ENCODE measurements at regions of chr2 and their contacts with region 1.

Region 1: GRCh38 chr2:221573430-221574230 is 1.5 kb upstream of the EPHA4 start:
- DNase-seq: peak in 1 of 2 donors; percentile 93
- H3K4me3 ChIP-seq: peak overlapping the region; percentile 77 to 92
- H3K27ac ChIP-seq: peak overlapping the region; percentile 83 to 88
- H3K4me1 ChIP-seq: peaks cover 7 to 13% of the 10 kb centered on the region in 2 donors
- H3K27me3 ChIP-seq: no peaks in the 10 kb centered on the region
- CTCF ChIP-seq: peak; percentile 97 to 99 (median 98)

Region 2: GRCh38 chr2:220076738-220077137 is 1496.9 kb before region 1 on chr2:
- intact Hi-C with region 1: loop called (anchors 2 kb)
- DNase-seq: peak in 1 of 2 donors; percentile 78
- H3K4me3 ChIP-seq: peak overlapping the region in 1 of 2 donors; percentile 32
- H3K27ac ChIP-seq: peak overlapping the region; percentile 80 to 85
- H3K4me1 ChIP-seq: peaks cover 0 to 23% of the 10 kb centered on the region in 2 donors
- H3K27me3 ChIP-seq: no peaks in the 10 kb centered on the region
- CTCF ChIP-seq: peak; percentile 21 to 45 (median 22)

Region 3: DNA sequence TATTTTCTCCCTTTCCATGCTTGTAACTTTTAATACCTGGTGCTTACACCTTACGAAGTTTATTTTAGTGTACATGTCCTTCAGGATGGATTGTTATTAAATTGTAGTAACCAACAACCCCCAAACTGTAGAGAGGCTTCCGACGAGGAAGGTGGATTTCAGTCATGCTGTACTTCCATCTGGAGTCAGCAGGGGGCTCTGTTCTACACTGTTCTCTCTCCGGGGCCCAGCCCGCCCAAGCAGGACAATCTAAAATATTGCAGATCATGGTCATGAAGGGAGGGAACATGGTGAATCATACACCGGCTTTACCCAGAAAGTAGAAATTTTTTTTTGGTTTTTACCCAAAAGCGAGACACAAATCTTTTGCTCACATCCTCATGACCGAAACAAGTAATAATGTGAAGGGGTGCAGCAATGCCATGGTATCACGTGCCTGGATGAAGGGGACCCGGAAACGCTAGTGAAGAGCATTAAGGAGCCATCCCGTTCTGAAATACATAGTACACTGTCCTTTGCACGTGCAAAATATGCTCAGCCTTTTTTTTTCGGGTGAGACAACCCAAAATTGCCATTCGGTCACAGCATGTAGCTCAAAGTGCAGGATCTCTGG is 886.3 kb before region 1 on chr2:
- intact Hi-C with region 1: loop called (anchors 1 kb)
- DNase-seq: peak in 1 of 2 donors; percentile 82
- H3K4me3 ChIP-seq: no peak overlapping the region
- H3K27ac ChIP-seq: no peak overlapping the region
- H3K4me1 ChIP-seq: no peaks in the 10 kb centered on the region
- H3K27me3 ChIP-seq: no peaks in the 10 kb centered on the region
- CTCF ChIP-seq: peak; percentile 67 to 91 (median 84)

Region 4: DNA sequence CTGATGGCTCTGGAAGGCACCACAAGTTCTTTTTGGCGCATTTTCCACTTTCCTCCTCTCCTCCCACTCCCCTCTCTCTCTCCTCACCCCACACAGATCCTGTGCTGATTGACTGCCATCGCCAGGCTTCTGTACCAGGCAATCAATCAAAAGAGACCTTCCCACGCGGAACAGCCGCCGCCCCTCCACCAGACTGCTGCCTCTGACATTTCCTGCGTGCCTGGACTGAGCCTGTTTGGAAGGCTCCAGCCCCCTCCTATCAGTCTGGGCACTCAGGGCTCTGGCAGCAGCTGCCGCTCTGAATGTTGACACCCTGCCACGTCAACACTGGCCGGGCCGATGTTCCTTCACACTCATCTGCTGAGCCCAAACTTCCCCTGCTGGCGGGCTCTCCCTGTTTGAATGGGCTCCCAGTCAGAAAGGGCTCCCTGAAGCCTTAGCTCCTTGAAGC is 469.2 kb before region 1 on chr2:
- intact Hi-C with region 1: loop called (anchors 5 kb)
- DNase-seq: peak; percentile 42 to 84
- H3K4me3 ChIP-seq: peak overlapping the region; percentile 9 to 48
- H3K27ac ChIP-seq: peak overlapping the region; percentile 67 to 75
- H3K4me1 ChIP-seq: peaks cover 4 to 17% of the 10 kb centered on the region in 2 donors
- H3K27me3 ChIP-seq: no peaks in the 10 kb centered on the region
- CTCF ChIP-seq: peak in 1 of 3 experiments; percentile 11

Region 5: DNA sequence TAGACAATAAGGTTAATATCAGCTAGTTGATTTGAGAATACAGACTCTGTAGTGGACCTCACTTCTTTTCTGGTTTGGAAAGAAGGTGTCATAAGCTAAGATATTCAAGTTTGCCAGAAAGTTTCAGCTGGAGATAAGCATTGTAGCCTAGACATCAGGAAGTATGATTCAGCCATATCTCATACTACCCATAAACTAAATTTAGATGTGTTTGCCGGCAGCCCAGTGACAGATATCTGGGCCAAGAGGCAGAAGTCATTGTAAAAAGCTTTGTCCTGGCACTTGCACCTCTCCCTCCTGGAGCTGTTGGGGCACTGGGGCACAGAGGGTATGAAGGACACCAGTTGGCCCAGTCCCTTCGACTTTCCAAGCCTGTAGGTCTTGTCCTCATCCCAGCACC is 129.5 kb before region 1 on chr2:
- intact Hi-C with region 1: loop called (anchors 2 kb)
- DNase-seq: peak in 1 of 2 donors; percentile 77
- H3K4me3 ChIP-seq: no peak overlapping the region
- H3K27ac ChIP-seq: peak overlapping the region; percentile 60 to 76
- H3K4me1 ChIP-seq: peaks cover 0 to 9% of the 10 kb centered on the region in 2 donors
- H3K27me3 ChIP-seq: no peaks in the 10 kb centered on the region
- CTCF ChIP-seq: no peak

Region 6: DNA sequence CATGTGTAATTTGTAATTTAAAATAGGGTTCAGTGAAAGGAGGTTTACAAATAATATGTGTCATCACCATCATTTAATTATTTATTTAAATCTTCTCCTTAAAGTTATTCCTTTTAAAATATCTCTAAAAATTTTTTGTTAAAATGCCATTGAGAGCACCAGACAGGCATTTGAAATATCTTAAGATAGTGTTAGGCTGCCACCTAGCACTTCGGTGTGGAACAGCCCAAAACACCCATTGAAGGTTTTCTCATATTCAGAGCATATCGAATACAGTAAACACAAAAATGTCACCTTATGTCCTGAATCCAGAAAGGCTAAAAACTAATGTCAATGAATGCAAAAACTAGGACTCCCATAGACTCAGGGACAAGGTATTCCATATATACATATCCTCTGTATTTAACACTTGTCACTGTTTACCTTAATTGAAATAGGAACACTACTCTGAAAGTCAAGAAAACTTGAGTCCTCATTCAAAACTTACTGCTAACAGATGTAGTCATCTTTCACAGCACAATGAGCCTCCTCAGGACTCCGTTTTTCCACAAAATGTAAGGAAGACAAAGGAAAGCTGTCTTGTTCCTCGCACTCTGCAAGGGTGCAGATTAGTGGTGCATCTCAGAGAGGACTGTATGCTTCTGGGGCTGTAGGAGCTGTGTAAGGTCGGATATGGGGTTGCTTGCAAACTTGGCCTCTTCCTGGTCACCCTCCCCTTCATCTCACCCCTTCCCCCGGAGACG is 395.6 kb after region 1 on chr2:
- intact Hi-C with region 1: loop called (anchors 1 kb)
- DNase-seq: no peak
- H3K4me3 ChIP-seq: no peak overlapping the region
- H3K27ac ChIP-seq: no peak overlapping the region
- H3K4me1 ChIP-seq: no peaks in the 10 kb centered on the region
- H3K27me3 ChIP-seq: no peaks in the 10 kb centered on the region
- CTCF ChIP-seq: peak; percentile 15 to 66 (median 65)